Motor neuron (in vitro differentiated cells): ENCODE measurements at regions of chr2 and their contacts with region 1.

Region 1: GRCh38 chr2:152189622-152190495 is 14.3 kb upstream of the STAM2 start:
- ATAC-seq: peak in 7 of 8 experiments; percentile 41 to 96 (median 62)
- H3K4me3 ChIP-seq: no peak overlapping the region
- H3K27ac ChIP-seq: no peak overlapping the region
- H3K4me1 ChIP-seq: no peaks in the 10 kb centered on the region

Region 2: GRCh38 chr2:152335010-152335725 is 145.3 kb after region 1 on chr2 and contains the start of gene FMNL2:
- in situ Hi-C with region 1: loop called in 1 of 9 experiments (anchors 10 kb)
- ATAC-seq: peak; percentile 68 to 91 (median 90)
- H3K4me3 ChIP-seq: peak within 1 kb of the TSS; percentile 57 to 99 (median 87)
- H3K27ac ChIP-seq: peak within 1 kb of the TSS; percentile 72 to 76
- H3K4me1 ChIP-seq: peaks cover 8 to 16% of the 10 kb centered on the region in 2 donors
- total RNA-seq, gene FMNL2: 28.9 to 179 (median 64.2) TPM

Region 3: DNA sequence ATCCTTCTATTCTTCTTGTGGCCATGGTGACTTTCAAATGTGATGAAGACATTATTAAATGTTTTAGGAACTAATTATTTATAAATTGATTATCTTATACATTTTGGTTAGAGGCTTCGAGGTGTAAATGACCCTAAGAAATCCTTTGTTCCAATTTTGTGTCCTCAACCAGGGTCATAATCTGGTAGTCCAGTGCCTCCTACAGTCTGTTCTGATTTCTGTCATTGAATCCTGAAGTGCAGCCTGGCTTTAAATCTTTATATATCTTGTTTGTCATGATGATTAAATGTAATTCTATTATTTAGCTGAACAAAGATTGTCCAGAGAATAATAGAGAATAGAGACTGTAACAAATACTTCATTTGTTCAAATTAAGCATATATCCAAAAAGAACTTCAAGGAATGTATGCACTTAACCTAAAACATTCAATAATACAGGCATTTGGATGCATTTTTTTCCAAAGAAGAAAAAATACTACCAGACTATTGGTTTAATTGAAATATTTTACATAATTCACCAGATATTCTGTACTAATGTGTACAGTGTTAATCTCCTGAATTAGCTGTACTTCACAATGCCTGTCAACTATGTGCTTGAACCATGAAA is 437.6 kb after region 1 on chr2:
- in situ Hi-C with region 1: loop called (anchors 10 to 25 kb)
- ATAC-seq: peak in 3 of 8 experiments; percentile 54 to 64 (median 54)
- H3K4me3 ChIP-seq: no peak overlapping the region
- H3K27ac ChIP-seq: no peak overlapping the region
- H3K4me1 ChIP-seq: no peaks in the 10 kb centered on the region